ENCODE measurements at regions of chr7 and their contacts with region 1.

Region 1: DNA sequence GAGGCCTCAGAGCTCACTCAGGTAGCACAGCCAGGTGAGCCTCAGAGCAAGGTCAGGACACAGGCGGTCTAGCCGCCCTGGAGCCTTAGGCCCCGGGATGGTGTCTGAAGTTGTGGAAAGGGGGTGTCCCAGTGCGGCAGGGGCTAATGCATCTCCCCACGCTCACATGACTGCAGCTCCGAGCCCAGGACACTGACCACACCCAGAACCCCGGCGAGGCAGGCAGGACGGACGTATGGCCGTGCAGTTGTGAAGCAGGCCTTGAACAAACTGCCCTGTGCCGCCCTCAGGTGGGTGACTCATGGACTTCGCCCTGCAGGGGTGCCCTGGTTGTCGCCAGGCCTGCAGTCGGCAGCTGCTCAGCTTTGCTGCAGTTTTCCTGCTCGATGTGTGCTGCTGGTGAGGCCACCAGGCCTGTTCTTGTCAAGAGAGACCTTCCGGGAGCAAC is 5.0 kb upstream of the PRKAR1B start:
- DNase-seq: peak; percentile 75
- ATAC-seq: peak; percentile 81

Region 2: GRCh38 chr7:332646-333392 is 399.3 kb before region 1 on chr7:
- intact Hi-C with region 1: loop called (anchors 2 kb)
- DNase-seq: peak; percentile 90
- ATAC-seq: peak; percentile 92

Region 3: GRCh38 chr7:519484-520390 is 212.4 kb before region 1 on chr7 and contains the start of gene PDGFA:
- intact Hi-C with region 1: loop called (anchors 1 kb)
- DNase-seq: no peak
- ATAC-seq: peak; percentile 30
- total RNA-seq, gene PDGFA: 37.2 TPM

Region 4: GRCh38 chr7:636396-636795 is 95.7 kb before region 1 on chr7:
- intact Hi-C with region 1: loop called (anchors 5 kb)
- DNase-seq: no peak
- ATAC-seq: no peak

Region 5: DNA sequence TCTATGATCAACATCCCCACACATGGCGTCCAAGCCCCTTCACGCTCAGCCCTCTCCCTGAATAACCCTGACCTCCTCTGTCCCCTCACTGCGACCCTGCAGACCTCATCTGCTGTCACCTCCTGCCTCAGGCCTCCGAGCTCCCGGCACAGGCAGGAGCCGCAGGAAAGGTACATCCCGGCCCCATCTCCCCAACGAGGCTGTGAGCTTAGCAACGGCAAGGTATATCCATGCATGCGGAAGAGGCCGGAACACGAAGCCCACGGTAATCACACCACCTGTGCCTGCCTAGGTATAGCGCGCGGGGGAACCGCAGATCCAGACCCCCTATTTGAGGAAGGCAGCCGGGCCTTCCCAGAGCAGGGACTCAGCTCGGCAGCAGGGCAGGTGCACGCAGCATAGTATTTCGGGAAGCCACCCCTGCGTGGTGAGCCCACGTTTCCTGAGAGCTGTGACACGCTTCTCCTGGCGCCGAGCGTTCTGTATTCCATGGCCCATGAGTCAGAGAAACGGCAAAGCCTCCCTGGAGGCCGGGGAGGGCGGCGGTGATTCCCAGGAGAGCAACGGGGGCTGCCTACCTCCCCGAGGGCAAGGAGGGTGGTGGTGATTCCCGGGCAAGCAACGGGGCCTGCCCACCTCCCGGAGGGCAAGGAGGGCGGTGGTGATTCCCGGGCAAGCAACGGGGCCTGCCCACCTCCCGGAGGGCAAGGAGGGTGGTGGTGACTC is 55.7 kb before region 1 on chr7:
- intact Hi-C with region 1: no loop called
- DNase-seq: no peak
- ATAC-seq: no peak

Region 6: DNA sequence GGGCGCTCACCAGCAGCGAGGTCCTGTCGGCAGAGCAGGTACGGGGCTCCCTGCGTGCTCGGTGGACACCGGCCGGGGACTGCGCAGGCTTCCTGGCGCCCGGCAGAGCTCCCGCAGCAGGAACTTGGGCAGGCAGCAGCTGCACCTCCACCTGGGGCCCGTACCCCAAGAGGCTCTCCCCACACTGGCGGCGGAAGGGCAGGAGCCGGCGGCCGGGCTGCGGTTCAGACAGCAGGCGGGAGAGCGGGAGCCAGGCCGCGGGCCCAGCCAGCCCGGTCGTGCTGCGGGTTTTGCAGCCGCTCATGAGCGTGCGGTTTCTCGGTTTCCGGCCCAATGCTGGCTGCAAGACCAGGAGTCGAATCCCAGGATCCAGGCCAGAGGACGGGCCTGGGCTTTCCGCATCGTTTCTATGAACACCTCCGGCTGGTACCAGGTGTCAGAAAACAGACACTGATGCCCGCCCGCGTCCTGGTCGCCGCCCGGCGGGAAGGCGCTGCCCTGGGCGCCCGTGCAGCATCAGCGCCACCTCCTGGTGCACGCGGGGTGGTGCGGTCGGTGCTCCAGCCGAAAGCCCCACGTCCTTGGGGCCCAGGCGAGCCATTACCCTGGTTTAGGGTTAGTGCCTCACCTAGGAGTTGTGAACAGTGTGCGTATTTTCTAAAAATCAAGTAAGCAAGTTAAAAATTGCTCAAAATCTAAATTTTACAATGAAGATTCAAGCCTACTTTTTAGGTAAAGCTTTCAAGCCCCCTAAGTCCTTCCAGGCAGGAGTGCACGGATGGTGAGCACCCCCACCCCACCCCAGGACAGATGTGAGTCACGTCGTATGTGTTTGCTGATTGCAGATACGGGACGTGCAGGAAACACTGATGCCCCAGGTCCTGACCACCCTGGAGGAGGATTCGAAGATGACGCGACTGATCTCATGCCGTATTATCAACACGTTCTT is 42.3 kb after region 1 on chr7:
- intact Hi-C with region 1: loop called (anchors 5 kb)
- DNase-seq: no peak
- ATAC-seq: peak; percentile 56

Region 7: DNA sequence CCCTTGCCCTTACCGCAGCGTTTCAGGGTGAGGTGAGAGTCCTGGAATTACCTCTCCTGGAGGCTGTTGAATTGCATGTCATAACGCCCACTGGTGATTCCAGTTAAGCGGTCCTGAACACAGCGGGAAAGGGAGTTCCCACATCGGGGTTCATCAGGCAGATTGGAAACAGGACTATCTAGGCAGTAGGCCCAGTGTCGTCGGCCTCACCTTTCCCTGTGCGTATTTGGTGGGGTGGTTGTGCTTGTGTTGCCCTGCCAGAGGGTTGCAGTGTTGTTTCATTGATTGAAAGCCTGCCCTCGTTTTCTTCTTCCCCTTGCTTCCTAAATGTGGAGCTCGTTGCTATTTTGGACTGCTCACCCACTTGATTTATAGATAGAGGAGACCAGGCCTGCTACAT is 89.6 kb after region 1 on chr7:
- intact Hi-C with region 1: no loop called
- DNase-seq: no peak
- ATAC-seq: peak; percentile 70

Measured in Right ventricle myocardium inferior (tissue), 1 donor.